ENCODE measurements at regions of chr2 and their contacts with region 1.

Region 1: DNA sequence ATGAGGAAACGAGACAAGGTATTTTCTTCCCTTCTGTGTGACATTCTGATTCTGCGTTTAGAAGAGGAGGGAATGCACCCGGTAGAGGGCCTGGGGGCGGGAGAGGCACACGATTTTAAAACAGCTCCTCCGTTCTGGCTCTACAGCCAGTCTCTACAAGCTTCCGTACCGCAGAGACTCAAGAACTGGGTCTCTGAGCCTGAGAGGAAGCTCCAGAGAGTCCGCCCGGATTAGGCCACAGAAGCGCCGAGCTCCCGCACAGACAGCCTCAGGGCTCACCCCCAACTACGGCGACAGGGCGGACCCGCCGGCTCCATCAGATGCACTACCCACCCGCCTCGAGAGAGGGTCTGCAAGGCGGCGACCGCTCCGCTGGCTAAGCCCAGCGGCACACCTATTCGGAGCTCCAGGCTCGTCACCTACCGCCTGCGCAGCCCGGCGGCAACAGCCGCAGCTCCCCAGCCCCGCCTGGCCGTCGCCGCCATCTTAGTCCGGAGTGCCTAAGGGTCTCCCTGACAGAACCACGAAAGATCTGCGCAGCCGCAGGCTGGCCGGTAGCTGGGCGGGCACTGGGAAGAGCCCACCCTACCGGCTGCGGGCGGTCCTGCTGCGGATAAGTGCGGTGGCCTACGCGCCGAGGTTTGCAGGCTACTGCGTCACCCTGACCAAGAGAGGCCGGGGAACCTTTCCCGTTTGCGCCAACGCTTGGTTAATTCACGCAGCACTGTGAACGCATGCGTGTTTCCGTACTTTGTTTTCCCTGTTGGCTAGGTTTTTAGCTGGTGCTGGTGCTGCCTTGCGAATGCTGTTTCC is at the start of gene NFU1:
- DNase-seq: peak; percentile 85 to 91 (median 89)
- H3K4me3 ChIP-seq: peak within 1 kb of the TSS; percentile 75 to 82
- H3K4me3 Mint-ChIP-seq: peak within 1 kb of the TSS; percentile 93 to 99 (median 98)
- H3K27ac ChIP-seq: peak within 1 kb of the TSS; percentile 91
- H3K27ac Mint-ChIP-seq: peak within 1 kb of the TSS; percentile 98 to 100 (median 99)
- H3K4me1 ChIP-seq: peaks cover 32% of the 10 kb centered on the region
- H3K4me1 Mint-ChIP-seq: peaks cover 26 to 48% (median 34%) of the 10 kb centered on the region in 4 donors
- H3K27me3 ChIP-seq: no peaks in the 10 kb centered on the region
- H3K27me3 Mint-ChIP-seq: no peaks in the 10 kb centered on the region
- total RNA-seq, gene NFU1: 23.9 to 27.0 TPM

Region 2: DNA sequence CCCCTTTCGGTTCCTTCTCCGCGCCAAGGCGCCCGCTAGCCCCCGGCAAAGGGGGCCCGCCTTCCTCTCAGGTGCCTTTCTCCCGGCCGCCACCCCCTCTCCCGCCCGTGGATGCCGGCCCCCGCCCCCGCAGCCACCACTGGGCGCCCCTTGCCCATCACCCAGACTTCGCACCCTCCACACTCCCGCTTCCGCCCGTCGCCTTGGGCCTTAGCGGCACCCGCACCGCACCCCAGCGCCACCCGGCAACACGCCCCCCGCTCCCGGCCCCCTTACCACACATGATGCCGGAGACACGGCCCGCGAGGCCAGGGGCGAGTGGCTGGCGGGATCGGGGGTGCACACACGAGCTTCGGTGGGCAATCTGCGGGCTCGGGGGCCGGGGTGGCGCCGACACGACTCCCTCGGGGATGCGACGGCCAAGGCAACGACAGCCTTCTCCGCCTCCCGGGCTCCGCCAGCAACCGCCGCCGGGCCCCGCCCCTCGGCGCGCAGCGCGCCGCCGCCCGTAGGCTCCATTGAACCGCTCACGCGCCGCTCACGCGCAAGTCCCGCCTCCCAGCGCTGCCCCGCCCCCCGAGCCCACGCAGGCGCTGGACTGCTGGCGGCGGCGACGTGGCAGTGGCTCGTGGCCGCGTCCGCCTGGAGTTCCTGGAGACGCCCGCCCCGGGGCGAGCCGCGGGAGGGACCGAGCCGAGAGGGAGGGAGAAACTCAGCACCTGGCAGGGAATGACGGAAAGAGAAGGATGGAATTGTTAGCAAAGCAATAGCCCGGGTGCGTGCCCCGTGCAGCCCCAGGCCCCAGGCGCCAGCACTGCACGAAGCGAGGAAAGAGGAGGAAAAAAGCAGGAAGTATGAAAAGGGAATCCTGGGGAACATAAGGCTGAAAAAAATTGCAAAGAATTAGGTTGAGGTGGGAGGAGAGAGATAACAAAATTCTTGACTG is 50.1 kb before region 1 on chr2 and contains the start of gene GFPT1:
- CTCF ChIA-PET with region 1: interaction called, 8 read pairs
- POLR2A ChIA-PET with region 1: interaction called, 22 read pairs
- intact Hi-C with region 1: loop called (anchors 1 kb)
- DNase-seq: peak; percentile 87 to 91 (median 90)
- H3K4me3 ChIP-seq: peak within 1 kb of the TSS; percentile 66 to 77
- H3K4me3 Mint-ChIP-seq: peak within 1 kb of the TSS; percentile 85 to 91 (median 89)
- H3K27ac ChIP-seq: peak within 1 kb of the TSS; percentile 66
- H3K27ac Mint-ChIP-seq: peak within 1 kb of the TSS; percentile 80 to 97 (median 89)
- H3K4me1 ChIP-seq: peaks cover 38% of the 10 kb centered on the region
- H3K4me1 Mint-ChIP-seq: peaks cover 27 to 50% (median 39%) of the 10 kb centered on the region in 4 donors
- H3K27me3 ChIP-seq: no peaks in the 10 kb centered on the region
- H3K27me3 Mint-ChIP-seq: no peaks in the 10 kb centered on the region
- total RNA-seq, gene GFPT1: 23.1 to 25.8 TPM

Region 3: GRCh38 chr2:69459936-69460335 is 22.8 kb after region 1 on chr2:
- CTCF ChIA-PET with region 1: interaction called, 3 read pairs
- POLR2A ChIA-PET with region 1: interaction called, 9 read pairs
- intact Hi-C with region 1: loop called (anchors 2 kb)
- DNase-seq: no peak
- H3K4me3 ChIP-seq: no peak overlapping the region
- H3K4me3 Mint-ChIP-seq: no peak overlapping the region
- H3K27ac ChIP-seq: no peak overlapping the region
- H3K27ac Mint-ChIP-seq: peak overlapping the region in 1 of 7 donors; percentile 48
- H3K4me1 ChIP-seq: no peaks in the 10 kb centered on the region
- H3K4me1 Mint-ChIP-seq: peaks cover 5 to 13% (median 9%) of the 10 kb centered on the region in 4 donors
- H3K27me3 ChIP-seq: no peaks in the 10 kb centered on the region
- H3K27me3 Mint-ChIP-seq: no peaks in the 10 kb centered on the region

Region 4: GRCh38 chr2:69477627-69478026 is 40.5 kb after region 1 on chr2:
- CTCF ChIA-PET with region 1: interaction called, 3 read pairs
- POLR2A ChIA-PET with region 1: interaction called, 4 read pairs
- intact Hi-C with region 1: loop called (anchors 5 kb)
- DNase-seq: no peak
- H3K4me3 ChIP-seq: no peak overlapping the region
- H3K4me3 Mint-ChIP-seq: peak overlapping the region in 1 of 8 donors; percentile 10
- H3K27ac ChIP-seq: no peak overlapping the region
- H3K27ac Mint-ChIP-seq: peak overlapping the region; percentile 2 to 69 (median 56)
- H3K4me1 ChIP-seq: peaks cover 22% of the 10 kb centered on the region
- H3K4me1 Mint-ChIP-seq: peaks cover 22 to 45% (median 35%) of the 10 kb centered on the region in 4 donors
- H3K27me3 ChIP-seq: no peaks in the 10 kb centered on the region
- H3K27me3 Mint-ChIP-seq: no peaks in the 10 kb centered on the region

Region 5: DNA sequence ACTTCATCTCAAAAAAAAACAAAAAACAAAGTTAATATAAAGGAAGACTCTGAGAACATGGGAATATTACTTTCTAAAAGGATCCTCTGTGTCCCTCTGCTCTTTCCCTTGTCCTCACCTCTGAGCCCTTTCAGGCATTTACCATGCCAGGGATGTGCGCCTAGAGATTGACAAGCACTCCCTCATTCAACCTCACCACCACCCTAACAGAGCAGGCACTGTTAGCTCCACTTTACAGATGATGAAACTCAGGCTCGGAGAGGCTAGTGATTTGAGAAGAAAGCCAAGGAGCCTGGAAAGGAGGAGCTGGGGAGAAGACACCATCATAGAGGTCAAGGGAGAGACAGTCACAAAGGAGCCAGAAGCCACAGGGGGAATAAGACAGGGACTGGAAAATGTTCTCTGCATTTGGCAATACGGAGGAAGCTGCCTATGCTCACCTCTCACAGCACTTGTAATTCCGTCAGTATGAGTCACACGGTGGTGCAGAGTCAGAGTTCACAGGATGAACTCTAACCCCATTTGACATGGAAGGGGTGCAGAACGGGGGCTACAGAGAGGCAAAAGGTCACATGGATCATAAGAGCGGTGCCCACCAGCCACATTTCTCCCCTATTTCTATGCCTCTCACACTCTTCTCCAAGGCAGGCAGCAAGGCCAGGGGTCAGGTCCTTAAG is 101.9 kb after region 1 on chr2:
- CTCF ChIA-PET with region 1: no interaction called
- POLR2A ChIA-PET with region 1: no interaction called
- intact Hi-C with region 1: no loop called
- DNase-seq: no peak
- H3K4me3 ChIP-seq: no peak overlapping the region
- H3K4me3 Mint-ChIP-seq: no peak overlapping the region
- H3K27ac ChIP-seq: no peak overlapping the region
- H3K27ac Mint-ChIP-seq: peak overlapping the region in 6 of 7 donors; percentile 10 to 70 (median 48)
- H3K4me1 ChIP-seq: peaks cover 23% of the 10 kb centered on the region
- H3K4me1 Mint-ChIP-seq: peaks cover 27 to 44% (median 36%) of the 10 kb centered on the region in 4 donors
- H3K27me3 ChIP-seq: no peaks in the 10 kb centered on the region
- H3K27me3 Mint-ChIP-seq: no peaks in the 10 kb centered on the region

Region 6: DNA sequence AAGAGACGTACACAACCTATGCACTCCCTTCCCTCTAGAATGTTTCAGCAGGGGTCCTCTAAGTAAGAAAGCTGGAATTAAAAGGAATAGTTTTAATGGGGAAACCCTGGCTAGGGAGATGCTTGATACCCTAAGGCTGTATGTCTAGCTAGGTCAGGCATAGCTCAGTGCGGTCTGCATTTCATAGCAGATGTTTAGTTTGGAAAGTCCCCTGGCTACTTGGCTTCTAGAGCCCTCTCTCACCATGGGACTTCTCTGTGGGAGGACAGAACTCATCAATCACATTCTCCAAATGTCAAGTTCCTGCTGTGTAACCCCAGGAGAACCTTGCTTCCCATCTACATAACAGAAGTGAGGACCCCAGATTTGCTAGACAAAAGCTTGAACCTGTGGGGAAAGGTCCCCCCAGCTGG is 280.7 kb after region 1 on chr2:
- CTCF ChIA-PET with region 1: interaction called, 5 read pairs
- POLR2A ChIA-PET with region 1: no interaction called
- intact Hi-C with region 1: loop called (anchors 1 kb)
- DNase-seq: no peak
- H3K4me3 ChIP-seq: no peak overlapping the region
- H3K4me3 Mint-ChIP-seq: no peak overlapping the region
- H3K27ac ChIP-seq: no peak overlapping the region
- H3K27ac Mint-ChIP-seq: no peak overlapping the region
- H3K4me1 ChIP-seq: peaks cover 9% of the 10 kb centered on the region
- H3K4me1 Mint-ChIP-seq: peaks cover 8 to 12% (median 10%) of the 10 kb centered on the region in 4 donors
- H3K27me3 ChIP-seq: no peaks in the 10 kb centered on the region
- H3K27me3 Mint-ChIP-seq: no peaks in the 10 kb centered on the region

Region 7: DNA sequence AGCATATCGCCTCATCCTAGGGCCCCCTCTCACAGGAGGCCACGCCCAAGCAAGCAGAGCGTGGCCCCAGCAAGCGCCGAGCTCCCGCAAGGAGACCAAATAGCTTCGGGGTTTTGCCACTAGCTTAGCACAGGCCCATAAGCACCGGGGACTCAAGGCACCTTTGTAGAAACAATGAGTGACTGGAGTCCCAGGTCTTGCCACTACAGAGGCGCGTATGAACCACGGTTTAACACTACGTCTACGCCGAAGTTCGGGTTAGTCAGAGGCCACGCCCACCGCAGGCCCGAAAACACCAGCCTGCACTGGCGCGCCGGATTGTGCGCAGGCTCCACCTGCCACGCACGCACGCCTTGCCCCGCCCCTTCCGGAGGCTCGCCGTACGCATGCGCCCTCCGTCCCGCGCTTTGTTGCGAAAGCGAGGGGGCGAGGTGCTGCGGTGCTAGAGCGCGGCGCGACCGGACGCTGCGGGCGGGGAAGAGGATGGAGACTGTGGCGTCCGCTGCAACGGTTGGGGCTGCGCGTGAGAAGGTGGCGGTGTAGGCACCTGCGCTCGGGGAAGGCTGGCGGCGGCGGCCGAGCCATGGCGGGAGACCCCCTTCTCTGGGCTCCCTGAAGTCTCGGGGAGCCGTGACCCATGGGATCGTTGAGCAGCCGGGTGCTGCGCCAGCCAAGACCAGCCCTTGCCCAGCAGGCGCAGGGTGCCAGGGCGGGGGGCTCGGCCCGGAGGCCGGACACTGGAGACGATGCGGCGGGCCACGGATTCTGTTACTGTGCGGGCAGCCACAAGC is 392.3 kb after region 1 on chr2 and contains the start of gene GMCL1:
- CTCF ChIA-PET with region 1: no interaction called
- POLR2A ChIA-PET with region 1: interaction called, 15 read pairs
- intact Hi-C with region 1: loop called (anchors 5 kb)
- DNase-seq: peak; percentile 98 to 99 (median 99)
- H3K4me3 ChIP-seq: peak within 1 kb of the TSS; percentile 54 to 71
- H3K4me3 Mint-ChIP-seq: peak within 1 kb of the TSS; percentile 87 to 98 (median 96)
- H3K27ac ChIP-seq: peak within 1 kb of the TSS; percentile 92
- H3K27ac Mint-ChIP-seq: peak within 1 kb of the TSS; percentile 93 to 98 (median 96)
- H3K4me1 ChIP-seq: peaks cover 42% of the 10 kb centered on the region
- H3K4me1 Mint-ChIP-seq: peaks cover 21 to 69% (median 43%) of the 10 kb centered on the region in 4 donors
- H3K27me3 ChIP-seq: no peaks in the 10 kb centered on the region
- H3K27me3 Mint-ChIP-seq: no peaks in the 10 kb centered on the region
- total RNA-seq, gene GMCL1: 28.2 to 31.8 TPM

Measured in CD4-positive, alpha-beta memory T cell (primary cell).